ENCODE measurements at regions of chr12 and their contacts with region 1.

Region 1: GRCh38 chr12:15234011-15234410 is 12.8 kb upstream of the RERG start:
- DNase-seq: no peak
- H3K4me3 ChIP-seq: no peak overlapping the region
- H3K27ac ChIP-seq: no peak overlapping the region
- H3K4me1 ChIP-seq: no peaks in the 10 kb centered on the region
- H3K27me3 ChIP-seq: peaks cover 3% of the 10 kb centered on the region; the same call in 1 of the 2 replicates
- CTCF ChIP-seq: no peak
- EP300 ChIP-seq: no peak
- RAD21 ChIP-seq: no peak

Region 2: DNA sequence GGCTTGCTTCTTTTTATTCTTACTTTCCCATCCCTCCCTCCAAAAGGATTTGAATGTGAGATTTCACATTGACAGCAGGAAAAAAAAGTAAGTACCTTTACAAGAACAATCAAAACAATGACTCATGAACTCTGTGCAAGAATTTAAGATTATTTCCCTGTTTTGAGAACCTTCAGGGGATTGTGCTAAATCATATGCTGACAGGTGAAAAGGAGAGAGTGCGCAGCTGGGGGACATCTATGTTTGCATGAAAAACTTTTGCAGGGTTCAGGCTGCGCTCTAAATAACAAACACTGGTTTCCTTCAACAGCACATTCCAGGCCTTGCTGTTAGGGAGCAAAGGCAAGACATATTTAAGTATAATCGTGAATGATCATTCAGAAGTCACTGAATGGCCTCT is 40.1 kb before region 1 on chr12:
- CTCF ChIA-PET with region 1: no interaction called
- POLR2A ChIA-PET with region 1: no interaction called
- DNase-seq: no peak
- H3K4me3 ChIP-seq: no peak overlapping the region
- H3K27ac ChIP-seq: no peak overlapping the region
- H3K4me1 ChIP-seq: no peaks in the 10 kb centered on the region
- H3K27me3 ChIP-seq: no peaks in the 10 kb centered on the region
- CTCF ChIP-seq: no peak
- EP300 ChIP-seq: no peak
- RAD21 ChIP-seq: no peak

Region 3: DNA sequence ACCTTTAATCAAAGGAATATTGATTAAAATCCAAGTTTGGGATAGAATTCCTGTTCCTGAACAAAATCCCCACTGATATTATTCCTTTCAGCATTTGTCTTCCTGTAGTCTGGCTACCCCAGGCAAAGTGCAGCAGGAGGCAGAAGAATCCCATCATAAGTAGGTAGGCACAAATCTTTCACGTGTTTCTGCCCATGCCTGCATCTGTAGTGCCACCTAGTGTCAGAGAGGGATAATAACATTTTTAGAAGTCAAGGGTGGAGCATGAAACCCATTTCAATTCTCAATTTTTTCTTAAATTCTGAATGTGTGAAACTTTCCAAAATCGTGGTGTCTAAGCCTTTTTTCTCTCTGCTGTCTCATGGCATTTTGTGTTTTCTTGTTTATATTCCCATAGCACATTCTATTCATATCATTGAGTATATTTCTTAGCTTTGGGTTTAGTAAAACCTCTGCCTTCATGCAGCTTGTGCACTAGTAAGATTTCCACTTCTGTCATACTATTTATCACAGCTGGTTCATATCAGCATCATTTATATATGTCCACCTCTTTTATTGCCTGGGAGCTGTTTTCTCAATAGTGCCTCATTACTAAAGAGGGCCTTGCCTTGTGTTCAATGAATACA is 35.0 kb after region 1 on chr12:
- CTCF ChIA-PET with region 1: interaction called, 11 read pairs
- POLR2A ChIA-PET with region 1: no interaction called
- DNase-seq: peak; percentile 67
- H3K4me3 ChIP-seq: no peak overlapping the region; a peak in 1 of 4 replicates
- H3K27ac ChIP-seq: no peak overlapping the region
- H3K4me1 ChIP-seq: no peaks in the 10 kb centered on the region; a peak in 2 of 4 replicates
- H3K27me3 ChIP-seq: no peaks in the 10 kb centered on the region
- CTCF ChIP-seq: peak; percentile 92
- EP300 ChIP-seq: no peak
- RAD21 ChIP-seq: peak; percentile 88